ENCODE measurements at regions of chr2 and their contacts with region 1.

Region 1: DNA sequence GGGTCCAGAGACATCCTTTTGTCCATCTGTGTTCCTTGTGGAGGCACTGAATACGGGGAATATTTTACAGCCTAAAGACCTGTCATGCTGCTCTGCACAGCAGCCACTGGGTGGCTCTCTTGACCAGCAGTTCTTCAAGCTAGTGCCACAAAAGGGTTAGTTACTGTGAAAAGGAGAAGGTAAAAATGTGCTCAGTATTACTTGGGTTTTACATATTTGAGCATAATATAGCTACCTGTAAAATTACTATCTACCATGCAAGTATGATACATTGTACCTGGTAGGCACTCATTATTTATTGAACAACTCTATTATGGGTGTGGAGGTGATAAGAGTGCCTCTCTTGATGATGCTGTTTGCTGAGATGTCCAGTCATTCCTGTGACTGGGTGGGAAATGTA is 23.6 kb downstream of the FZD5 start:
- DNase-seq: no peak
- H3K4me3 ChIP-seq: no peak overlapping the region
- H3K27ac ChIP-seq: no peak overlapping the region
- H3K4me1 ChIP-seq: no peaks in the 10 kb centered on the region
- H3K27me3 ChIP-seq: no peaks in the 10 kb centered on the region
- CTCF ChIP-seq: peak; percentile 60 to 81 (median 78)
- POLR2A ChIP-seq: no peak

Region 2: GRCh38 chr2:207107551-207107950 is 638.6 kb before region 1 on chr2:
- intact Hi-C with region 1: no loop called
- DNase-seq: no peak
- H3K4me3 ChIP-seq: no peak overlapping the region
- H3K27ac ChIP-seq: no peak overlapping the region
- H3K4me1 ChIP-seq: no peaks in the 10 kb centered on the region
- H3K27me3 ChIP-seq: no peaks in the 10 kb centered on the region
- CTCF ChIP-seq: no peak
- POLR2A ChIP-seq: no peak

Region 3: GRCh38 chr2:207782238-207783030 is 36.3 kb after region 1 on chr2:
- intact Hi-C with region 1: no loop called
- DNase-seq: no peak
- H3K4me3 ChIP-seq: no peak overlapping the region
- H3K27ac ChIP-seq: no peak overlapping the region
- H3K4me1 ChIP-seq: no peaks in the 10 kb centered on the region
- H3K27me3 ChIP-seq: no peaks in the 10 kb centered on the region
- CTCF ChIP-seq: no peak
- POLR2A ChIP-seq: no peak

Region 4: GRCh38 chr2:207807516-207807915 is 61.4 kb after region 1 on chr2:
- intact Hi-C with region 1: no loop called
- DNase-seq: no peak
- H3K4me3 ChIP-seq: no peak overlapping the region
- H3K27ac ChIP-seq: no peak overlapping the region
- H3K4me1 ChIP-seq: no peaks in the 10 kb centered on the region
- H3K27me3 ChIP-seq: no peaks in the 10 kb centered on the region
- CTCF ChIP-seq: no peak
- POLR2A ChIP-seq: no peak

Region 5: GRCh38 chr2:207974216-207974605 is 228.1 kb after region 1 on chr2:
- intact Hi-C with region 1: loop called (anchors 10 kb)
- DNase-seq: no peak
- H3K4me3 ChIP-seq: no peak overlapping the region
- H3K27ac ChIP-seq: no peak overlapping the region
- H3K4me1 ChIP-seq: peaks cover 11% of the 10 kb centered on the region
- H3K27me3 ChIP-seq: no peaks in the 10 kb centered on the region
- CTCF ChIP-seq: no peak
- POLR2A ChIP-seq: no peak

Region 6: GRCh38 chr2:208040199-208041171 is 294.4 kb after region 1 on chr2:
- intact Hi-C with region 1: loop called (anchors 10 kb)
- DNase-seq: no peak
- H3K4me3 ChIP-seq: no peak overlapping the region
- H3K27ac ChIP-seq: no peak overlapping the region
- H3K4me1 ChIP-seq: no peaks in the 10 kb centered on the region
- H3K27me3 ChIP-seq: no peaks in the 10 kb centered on the region
- CTCF ChIP-seq: peak; percentile 34 to 62 (median 61)
- POLR2A ChIP-seq: no peak

Region 7: GRCh38 chr2:208072250-208072892 is 326.2 kb after region 1 on chr2:
- intact Hi-C with region 1: loop called (anchors 10 kb)
- DNase-seq: no peak
- H3K4me3 ChIP-seq: no peak overlapping the region
- H3K27ac ChIP-seq: no peak overlapping the region
- H3K4me1 ChIP-seq: no peaks in the 10 kb centered on the region
- H3K27me3 ChIP-seq: no peaks in the 10 kb centered on the region
- CTCF ChIP-seq: peak; percentile 52 to 66 (median 52)
- POLR2A ChIP-seq: no peak